ENCODE measurements at regions of chr13 and their contacts with region 1.

Region 1: GRCh38 chr13:99436686-99437416 is 64.4 kb upstream of the TM9SF2 start:
- DNase-seq: peak; percentile 92 to 95 (median 94)
- H3K4me3 ChIP-seq: peak overlapping the region in 1 of 2 donors; percentile 15
- H3K4me3 Mint-ChIP-seq: peak overlapping the region; percentile 19 to 85 (median 52)
- H3K27ac ChIP-seq: no peak overlapping the region
- H3K27ac Mint-ChIP-seq: peak overlapping the region; percentile 48 to 100 (median 90)
- H3K4me1 ChIP-seq: peaks cover 57% of the 10 kb centered on the region
- H3K4me1 Mint-ChIP-seq: peaks cover 40 to 58% (median 51%) of the 10 kb centered on the region in 4 donors
- H3K27me3 ChIP-seq: no peaks in the 10 kb centered on the region
- H3K27me3 Mint-ChIP-seq: peaks cover 0 to 3% of the 10 kb centered on the region in 2 donors

Region 2: DNA sequence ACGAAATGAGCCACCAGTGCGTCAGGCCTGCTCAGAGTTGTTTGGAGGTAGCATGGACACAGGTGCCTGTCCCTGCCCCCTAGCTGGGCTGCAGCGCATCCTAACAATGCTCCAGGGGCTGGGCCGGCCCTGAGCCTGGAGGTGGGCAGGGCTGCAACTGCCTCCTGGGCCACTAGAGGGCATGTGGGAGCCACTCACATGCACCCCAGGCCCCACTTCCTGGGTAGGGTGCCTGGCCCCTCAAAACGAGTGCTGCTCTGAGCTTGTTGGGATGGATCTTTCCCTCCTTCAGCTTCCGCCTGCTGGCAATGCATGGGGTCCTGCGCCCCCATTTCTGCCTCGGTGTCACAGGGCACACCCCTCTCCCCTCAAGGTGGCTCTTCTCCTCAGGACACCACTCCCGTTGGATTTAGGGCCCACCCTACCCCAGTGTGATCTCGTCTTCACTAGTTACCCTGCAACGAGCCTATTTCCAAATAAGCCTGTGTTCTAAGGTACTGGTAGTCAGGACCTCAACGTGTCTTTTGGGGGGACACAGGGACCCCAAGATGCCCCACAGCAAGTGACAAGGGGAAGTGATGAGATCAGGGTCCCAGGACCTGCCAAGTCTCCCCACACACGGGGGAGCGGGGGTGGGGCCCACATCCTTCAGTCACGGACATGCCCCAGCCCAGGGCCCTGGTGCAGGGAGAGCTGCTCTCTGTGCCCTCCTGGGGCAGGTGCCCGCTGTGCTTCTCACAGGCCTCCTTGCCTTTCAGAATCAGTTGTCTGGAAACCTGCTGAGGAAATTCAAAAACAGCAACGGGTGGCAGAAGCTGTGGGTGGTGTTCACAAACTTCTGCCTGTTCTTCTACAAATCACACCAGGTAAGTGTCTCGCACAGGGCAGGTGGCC is 991.3 kb before region 1 on chr13:
- CTCF ChIA-PET with region 1: no interaction called
- POLR2A ChIA-PET with region 1: no interaction called
- intact Hi-C with region 1: no loop called
- DNase-seq: peak; percentile 73 to 79 (median 74)
- H3K4me3 ChIP-seq: no peak overlapping the region
- H3K4me3 Mint-ChIP-seq: peak overlapping the region in 7 of 8 donors; percentile 27 to 82 (median 57)
- H3K27ac ChIP-seq: peak overlapping the region; percentile 33
- H3K27ac Mint-ChIP-seq: peak overlapping the region; percentile 88 to 93 (median 90)
- H3K4me1 ChIP-seq: peaks cover 18% of the 10 kb centered on the region
- H3K4me1 Mint-ChIP-seq: peaks cover 7 to 37% (median 23%) of the 10 kb centered on the region in 4 donors
- H3K27me3 ChIP-seq: no peaks in the 10 kb centered on the region
- H3K27me3 Mint-ChIP-seq: no peaks in the 10 kb centered on the region

Region 3: GRCh38 chr13:99258210-99258860 is 178.5 kb before region 1 on chr13 and contains the start of gene GPR18:
- CTCF ChIA-PET with region 1: interaction called, 12 read pairs
- POLR2A ChIA-PET with region 1: interaction called, 3 read pairs
- intact Hi-C with region 1: no loop called
- DNase-seq: peak; percentile 50 to 69 (median 62)
- H3K4me3 ChIP-seq: peak within 1 kb of the TSS; percentile 52 to 67
- H3K4me3 Mint-ChIP-seq: peak within 1 kb of the TSS; percentile 89 to 98 (median 94)
- H3K27ac ChIP-seq: peak within 1 kb of the TSS; percentile 60
- H3K27ac Mint-ChIP-seq: peak within 1 kb of the TSS; percentile 84 to 96 (median 94)
- H3K4me1 ChIP-seq: peaks cover 55% of the 10 kb centered on the region
- H3K4me1 Mint-ChIP-seq: peaks cover 47 to 85% (median 59%) of the 10 kb centered on the region in 4 donors
- H3K27me3 ChIP-seq: no peaks in the 10 kb centered on the region
- H3K27me3 Mint-ChIP-seq: no peaks in the 10 kb centered on the region
- total RNA-seq, gene GPR18: 21.5 to 22.8 TPM

Region 4: DNA sequence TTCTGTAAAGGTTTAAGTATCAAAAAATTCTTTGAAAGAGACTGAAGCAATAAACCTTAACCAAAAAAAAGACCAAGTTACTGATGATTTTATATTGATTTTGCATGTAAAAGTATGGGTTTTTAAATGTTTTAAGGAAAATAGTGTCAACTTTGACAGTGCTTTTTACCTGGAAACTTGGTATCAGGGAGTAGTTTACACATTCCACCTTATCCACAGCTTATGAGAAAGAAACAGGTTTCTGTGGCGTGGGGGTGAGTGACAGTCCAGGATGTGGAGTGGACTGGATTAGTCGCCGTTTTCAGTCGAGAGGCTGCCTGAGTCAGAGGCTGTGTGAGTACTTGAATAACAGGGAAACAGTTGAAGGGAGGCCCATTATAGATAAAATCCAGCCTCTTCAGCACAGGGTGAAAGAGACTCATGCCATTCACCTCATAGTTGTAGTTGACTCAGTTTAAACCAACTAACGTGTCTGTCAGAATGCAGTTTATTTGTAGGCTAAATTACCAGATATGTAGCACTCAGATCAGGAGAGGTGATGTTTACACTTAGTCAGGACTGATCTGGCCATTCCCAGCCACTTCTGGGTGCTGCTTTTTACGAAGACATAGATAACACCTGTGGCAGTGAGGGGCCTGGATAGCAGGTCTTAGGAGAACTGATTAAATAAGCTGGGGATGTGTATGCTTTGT is 129.1 kb before region 1 on chr13:
- CTCF ChIA-PET with region 1: interaction called, 128 read pairs
- POLR2A ChIA-PET with region 1: interaction called, 152 read pairs
- intact Hi-C with region 1: loop called (anchors 1 kb)
- DNase-seq: peak in 2 of 5 donors; percentile 49 to 83
- H3K4me3 ChIP-seq: peak overlapping the region; percentile 47 to 78
- H3K4me3 Mint-ChIP-seq: peak overlapping the region; percentile 88 to 100 (median 99)
- H3K27ac ChIP-seq: peak overlapping the region; percentile 77
- H3K27ac Mint-ChIP-seq: peak overlapping the region; percentile 88 to 99 (median 96)
- H3K4me1 ChIP-seq: peaks cover 71% of the 10 kb centered on the region
- H3K4me1 Mint-ChIP-seq: peaks cover 48 to 82% (median 58%) of the 10 kb centered on the region in 4 donors
- H3K27me3 ChIP-seq: no peaks in the 10 kb centered on the region
- H3K27me3 Mint-ChIP-seq: no peaks in the 10 kb centered on the region

Region 5: GRCh38 chr13:99366075-99366987 is 70.5 kb before region 1 on chr13:
- CTCF ChIA-PET with region 1: interaction called, 22 read pairs
- POLR2A ChIA-PET with region 1: interaction called, 12 read pairs
- intact Hi-C with region 1: no loop called
- DNase-seq: no peak
- H3K4me3 ChIP-seq: peak overlapping the region in 1 of 2 donors; percentile 22
- H3K4me3 Mint-ChIP-seq: peak overlapping the region; percentile 41 to 93 (median 78)
- H3K27ac ChIP-seq: peak overlapping the region; percentile 70
- H3K27ac Mint-ChIP-seq: peak overlapping the region; percentile 96 to 98 (median 97)
- H3K4me1 ChIP-seq: peaks cover 98% of the 10 kb centered on the region
- H3K4me1 Mint-ChIP-seq: peaks cover 73 to 98% (median 85%) of the 10 kb centered on the region in 4 donors
- H3K27me3 ChIP-seq: no peaks in the 10 kb centered on the region
- H3K27me3 Mint-ChIP-seq: no peaks in the 10 kb centered on the region

Region 6: GRCh38 chr13:99393791-99394735 is 42.8 kb before region 1 on chr13:
- CTCF ChIA-PET with region 1: interaction called, 253 read pairs
- POLR2A ChIA-PET with region 1: interaction called, 63 read pairs
- intact Hi-C with region 1: no loop called
- DNase-seq: no peak
- H3K4me3 ChIP-seq: no peak overlapping the region
- H3K4me3 Mint-ChIP-seq: no peak overlapping the region
- H3K27ac ChIP-seq: no peak overlapping the region
- H3K27ac Mint-ChIP-seq: peak overlapping the region in 4 of 7 donors; percentile 31 to 87 (median 42)
- H3K4me1 ChIP-seq: no peaks in the 10 kb centered on the region
- H3K4me1 Mint-ChIP-seq: peaks cover 0 to 17% (median 2%) of the 10 kb centered on the region in 4 donors
- H3K27me3 ChIP-seq: no peaks in the 10 kb centered on the region
- H3K27me3 Mint-ChIP-seq: no peaks in the 10 kb centered on the region

Region 7: GRCh38 chr13:99425485-99426341 is 11.1 kb before region 1 on chr13:
- CTCF ChIA-PET with region 1: interaction called, 122 read pairs
- POLR2A ChIA-PET with region 1: interaction called, 15 read pairs
- intact Hi-C with region 1: loop called (anchors 1 kb)
- DNase-seq: peak; percentile 41 to 67 (median 49)
- H3K4me3 ChIP-seq: peak overlapping the region; percentile 14 to 34
- H3K4me3 Mint-ChIP-seq: peak overlapping the region; percentile 23 to 88 (median 82)
- H3K27ac ChIP-seq: peak overlapping the region; percentile 60
- H3K27ac Mint-ChIP-seq: peak overlapping the region; percentile 90 to 96 (median 93)
- H3K4me1 ChIP-seq: peaks cover 42% of the 10 kb centered on the region
- H3K4me1 Mint-ChIP-seq: peaks cover 29 to 59% (median 44%) of the 10 kb centered on the region in 4 donors
- H3K27me3 ChIP-seq: no peaks in the 10 kb centered on the region
- H3K27me3 Mint-ChIP-seq: no peaks in the 10 kb centered on the region

Region 8: GRCh38 chr13:99626461-99627082 is 189.7 kb after region 1 on chr13:
- CTCF ChIA-PET with region 1: no interaction called
- POLR2A ChIA-PET with region 1: no interaction called
- intact Hi-C with region 1: no loop called
- DNase-seq: no peak
- H3K4me3 ChIP-seq: no peak overlapping the region
- H3K4me3 Mint-ChIP-seq: no peak overlapping the region
- H3K27ac ChIP-seq: no peak overlapping the region
- H3K27ac Mint-ChIP-seq: no peak overlapping the region
- H3K4me1 ChIP-seq: no peaks in the 10 kb centered on the region
- H3K4me1 Mint-ChIP-seq: peaks cover 0 to 8% (median 6%) of the 10 kb centered on the region in 4 donors
- H3K27me3 ChIP-seq: peaks cover under 1% of the 10 kb centered on the region
- H3K27me3 Mint-ChIP-seq: no peaks in the 10 kb centered on the region

Region 9: DNA sequence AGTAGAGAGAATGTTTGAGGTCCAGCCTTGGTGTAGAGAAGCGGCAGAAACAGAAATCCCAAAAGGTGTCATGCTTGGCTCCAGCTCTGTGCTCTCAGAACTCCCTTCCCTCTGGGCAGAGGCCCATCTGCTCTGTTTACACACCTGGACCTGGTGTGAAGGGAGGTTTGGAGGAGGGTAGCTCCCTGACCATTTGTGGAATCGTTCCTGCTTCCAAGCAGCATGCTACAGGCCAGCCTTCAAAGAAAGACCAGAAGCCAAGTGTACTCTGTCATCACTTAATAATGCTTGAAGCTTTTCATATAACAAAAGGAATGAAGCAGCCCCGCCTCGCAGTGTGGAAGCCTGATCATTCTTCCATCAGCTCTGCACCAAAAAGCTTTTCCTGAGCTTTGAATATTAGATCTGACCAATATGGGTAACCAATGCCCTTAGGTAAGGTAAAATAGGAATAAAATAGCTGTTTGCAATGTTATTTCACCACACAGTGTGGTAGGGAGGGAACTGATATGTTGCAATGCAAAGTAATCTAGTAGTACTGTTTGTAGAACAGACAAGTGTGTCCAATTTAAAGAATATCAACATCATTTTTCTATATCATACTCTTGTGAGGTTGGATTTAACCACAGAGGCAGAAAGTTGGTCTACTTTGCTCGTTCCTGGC is 471.4 kb after region 1 on chr13:
- CTCF ChIA-PET with region 1: no interaction called
- POLR2A ChIA-PET with region 1: no interaction called
- intact Hi-C with region 1: no loop called
- DNase-seq: no peak
- H3K4me3 ChIP-seq: no peak overlapping the region
- H3K4me3 Mint-ChIP-seq: no peak overlapping the region
- H3K27ac ChIP-seq: no peak overlapping the region
- H3K27ac Mint-ChIP-seq: no peak overlapping the region
- H3K4me1 ChIP-seq: peaks cover 23% of the 10 kb centered on the region
- H3K4me1 Mint-ChIP-seq: peaks cover 15 to 27% (median 16%) of the 10 kb centered on the region in 4 donors
- H3K27me3 ChIP-seq: no peaks in the 10 kb centered on the region
- H3K27me3 Mint-ChIP-seq: peaks cover 6 to 9% of the 10 kb centered on the region in 2 donors

Measured in CD4-positive, alpha-beta memory T cell (primary cell).